ENCODE measurements at regions of chr17 and their contacts with region 1.

Region 1: GRCh38 chr17:31373150-31374093 is 18.1 kb upstream of the RAB11FIP4 start:
- DNase-seq: peak; percentile 34
- H3K4me3 Mint-ChIP-seq: no peak overlapping the region
- H3K27ac Mint-ChIP-seq: no peak overlapping the region
- H3K4me1 Mint-ChIP-seq: peaks cover 24% of the 10 kb centered on the region
- H3K27me3 Mint-ChIP-seq: no peaks in the 10 kb centered on the region

Region 2: GRCh38 chr17:31013844-31014243 is 359.6 kb before region 1 on chr17:
- CTCF ChIA-PET with region 1: interaction called, 6 read pairs
- intact Hi-C with region 1: loop called (anchors 2 kb)
- DNase-seq: no peak
- H3K4me3 Mint-ChIP-seq: no peak overlapping the region
- H3K27ac Mint-ChIP-seq: no peak overlapping the region
- H3K4me1 Mint-ChIP-seq: peaks cover 9% of the 10 kb centered on the region
- H3K27me3 Mint-ChIP-seq: peaks cover 2% of the 10 kb centered on the region

Region 3: GRCh38 chr17:31094600-31095238 is 278.7 kb before region 1 on chr17 and contains the start of gene NF1:
- CTCF ChIA-PET with region 1: interaction called, 3 read pairs
- intact Hi-C with region 1: loop called (anchors 5 kb)
- DNase-seq: peak; percentile 92
- H3K4me3 Mint-ChIP-seq: peak within 1 kb of the TSS; percentile 94
- H3K27ac Mint-ChIP-seq: peak within 1 kb of the TSS; percentile 72
- H3K4me1 Mint-ChIP-seq: peaks cover 11% of the 10 kb centered on the region
- H3K27me3 Mint-ChIP-seq: no peaks in the 10 kb centered on the region
- total RNA-seq, gene NF1: 19.5 to 22.8 TPM

Region 4: GRCh38 chr17:31216053-31216751 is 157.2 kb before region 1 on chr17:
- CTCF ChIA-PET with region 1: interaction called, 19 read pairs
- intact Hi-C with region 1: loop called (anchors 1 kb)
- DNase-seq: no peak
- H3K4me3 Mint-ChIP-seq: no peak overlapping the region
- H3K27ac Mint-ChIP-seq: no peak overlapping the region
- H3K4me1 Mint-ChIP-seq: no peaks in the 10 kb centered on the region
- H3K27me3 Mint-ChIP-seq: no peaks in the 10 kb centered on the region

Region 5: DNA sequence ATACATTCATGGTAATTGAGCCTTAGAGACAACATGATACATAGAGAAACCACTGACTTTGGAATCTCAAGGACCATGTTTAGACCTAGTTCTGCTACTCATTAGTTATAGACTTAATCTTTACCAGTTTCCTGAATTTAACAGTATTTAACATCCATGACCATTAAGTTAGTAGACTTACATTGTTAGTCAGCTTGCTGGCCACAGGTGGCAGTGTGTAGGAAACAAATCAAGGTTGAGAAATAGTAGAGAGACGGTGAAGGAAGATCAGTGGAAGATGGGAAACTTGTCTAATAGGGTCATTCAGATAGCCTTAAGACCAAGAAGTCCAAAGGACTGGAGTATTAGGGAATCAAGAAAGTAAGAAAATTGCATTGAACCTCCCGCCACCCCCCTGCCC is 107.4 kb before region 1 on chr17:
- CTCF ChIA-PET with region 1: interaction called, 6 read pairs
- intact Hi-C with region 1: loop called (anchors 1 kb)
- DNase-seq: peak; percentile 9
- H3K4me3 Mint-ChIP-seq: no peak overlapping the region
- H3K27ac Mint-ChIP-seq: no peak overlapping the region
- H3K4me1 Mint-ChIP-seq: no peaks in the 10 kb centered on the region
- H3K27me3 Mint-ChIP-seq: no peaks in the 10 kb centered on the region

Region 6: GRCh38 chr17:31313982-31314784 is 59.2 kb before region 1 on chr17 and contains the start of gene EVI2B:
- CTCF ChIA-PET with region 1: interaction called, 4 read pairs
- intact Hi-C with region 1: loop called (anchors 1 kb)
- DNase-seq: peak; percentile 18
- H3K4me3 Mint-ChIP-seq: peak within 1 kb of the TSS; percentile 82
- H3K27ac Mint-ChIP-seq: peak within 1 kb of the TSS; percentile 96
- H3K4me1 Mint-ChIP-seq: peaks cover 46% of the 10 kb centered on the region
- H3K27me3 Mint-ChIP-seq: no peaks in the 10 kb centered on the region
- total RNA-seq, gene EVI2B: 9.9 to 11.4 TPM

Region 7: DNA sequence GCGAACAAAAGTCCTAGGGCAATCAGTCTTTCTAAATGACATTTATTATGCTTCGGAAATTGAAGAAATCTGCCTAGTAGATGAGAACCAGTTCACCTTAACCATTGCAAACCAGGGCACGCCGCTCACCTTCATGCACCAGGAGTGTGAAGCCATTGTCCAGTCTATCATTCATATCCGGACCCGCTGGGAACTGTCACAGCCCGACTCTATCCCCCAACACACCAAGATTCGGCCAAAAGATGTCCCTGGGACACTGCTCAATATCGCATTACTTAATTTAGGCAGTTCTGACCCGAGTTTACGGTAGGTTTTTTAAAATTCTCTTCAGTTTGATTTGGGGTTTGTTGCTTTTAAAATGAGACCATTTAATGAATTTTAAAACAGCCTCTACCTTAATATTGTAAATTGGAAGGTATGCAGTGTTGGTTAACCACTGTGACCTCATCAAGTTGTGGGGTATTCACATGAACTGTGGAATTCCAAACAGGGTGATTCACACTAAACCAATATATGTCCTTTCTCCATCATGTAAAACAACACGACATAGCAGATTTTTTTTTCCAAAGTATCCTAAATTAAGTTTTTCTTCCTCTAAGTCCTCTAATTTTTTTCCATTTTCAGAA is 45.8 kb before region 1 on chr17:
- CTCF ChIA-PET with region 1: no interaction called
- intact Hi-C with region 1: no loop called
- DNase-seq: no peak
- H3K4me3 Mint-ChIP-seq: no peak overlapping the region
- H3K27ac Mint-ChIP-seq: no peak overlapping the region
- H3K4me1 Mint-ChIP-seq: peaks cover 33% of the 10 kb centered on the region
- H3K27me3 Mint-ChIP-seq: no peaks in the 10 kb centered on the region

Measured in activated naive CD4-positive, alpha-beta T cell treated with anti-CD3 and anti-CD28 coated beads for 36 hours (primary cell).